ENCODE measurements at regions of chr10 and their contacts with region 1.

Region 1: DNA sequence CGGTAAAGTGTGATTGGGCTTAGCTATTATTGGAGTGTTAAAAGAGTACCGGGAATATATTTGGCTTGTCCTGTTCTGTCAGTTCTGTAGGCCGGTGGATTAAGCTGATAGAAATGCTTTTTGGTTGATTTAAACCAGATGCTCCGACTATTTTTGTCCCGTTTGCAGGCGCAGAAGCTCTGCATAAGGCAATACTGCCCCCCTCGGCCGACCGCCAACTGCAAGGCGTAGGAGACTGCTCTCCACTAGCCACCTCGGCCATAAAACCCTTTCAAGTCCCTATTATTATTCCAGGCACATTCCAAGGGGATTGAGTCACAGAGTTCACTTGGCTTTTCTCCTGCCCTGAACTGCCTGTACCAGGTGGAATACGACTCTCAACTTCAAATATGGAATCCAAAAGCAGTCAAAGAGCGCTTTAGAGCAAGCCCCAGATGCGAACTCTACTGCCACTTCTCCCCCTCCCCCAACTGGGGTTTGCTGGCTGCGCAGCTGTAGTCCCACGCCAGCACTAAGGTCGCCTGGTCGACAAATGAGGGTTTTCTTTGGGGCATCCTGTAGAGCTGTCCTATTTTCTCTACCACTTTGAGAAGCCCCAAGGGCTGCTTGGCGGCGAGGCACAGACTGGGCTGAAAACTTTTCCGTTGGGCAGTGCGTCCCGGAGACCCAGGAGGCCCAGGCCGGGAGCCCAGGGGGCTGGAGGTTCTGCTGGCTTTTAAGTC is 108.3 kb downstream of the REEP3 start:
- DNase-seq: peak; percentile 89
- H3K4me3 Mint-ChIP-seq: peak overlapping the region; percentile 90
- H3K27ac Mint-ChIP-seq: peak overlapping the region; percentile 75
- H3K4me1 Mint-ChIP-seq: peaks cover 24% of the 10 kb centered on the region
- H3K27me3 Mint-ChIP-seq: peaks cover 2% of the 10 kb centered on the region

Region 2: GRCh38 chr10:63173468-63174232 is 455.9 kb before region 1 on chr10:
- CTCF ChIA-PET with region 1: interaction called, 139 read pairs
- POLR2A ChIA-PET with region 1: no interaction called
- intact Hi-C with region 1: loop called (anchors 1 kb)
- DNase-seq: no peak
- H3K4me3 Mint-ChIP-seq: no peak overlapping the region
- H3K27ac Mint-ChIP-seq: peak overlapping the region; percentile 65
- H3K4me1 Mint-ChIP-seq: peaks cover 52% of the 10 kb centered on the region
- H3K27me3 Mint-ChIP-seq: no peaks in the 10 kb centered on the region

Region 3: GRCh38 chr10:63236113-63236935 is 393.2 kb before region 1 on chr10:
- CTCF ChIA-PET with region 1: interaction called, 11 read pairs
- POLR2A ChIA-PET with region 1: no interaction called
- intact Hi-C with region 1: no loop called
- DNase-seq: no peak
- H3K4me3 Mint-ChIP-seq: no peak overlapping the region
- H3K27ac Mint-ChIP-seq: peak overlapping the region; percentile 38
- H3K4me1 Mint-ChIP-seq: peaks cover 55% of the 10 kb centered on the region
- H3K27me3 Mint-ChIP-seq: no peaks in the 10 kb centered on the region

Region 4: GRCh38 chr10:63465293-63466143 is 164.0 kb before region 1 on chr10 and contains the start of gene JMJD1C:
- CTCF ChIA-PET with region 1: interaction called, 12 read pairs
- POLR2A ChIA-PET with region 1: no interaction called
- intact Hi-C with region 1: loop called (anchors 2 kb)
- DNase-seq: peak; percentile 69
- H3K4me3 Mint-ChIP-seq: peak within 1 kb of the TSS; percentile 91
- H3K27ac Mint-ChIP-seq: peak within 1 kb of the TSS; percentile 58
- H3K4me1 Mint-ChIP-seq: peaks cover 18% of the 10 kb centered on the region
- H3K27me3 Mint-ChIP-seq: no peaks in the 10 kb centered on the region
- total RNA-seq, gene JMJD1C: 42.6 to 47.3 TPM

Region 5: GRCh38 chr10:63573068-63573697 is 56.3 kb before region 1 on chr10:
- CTCF ChIA-PET with region 1: no interaction called
- POLR2A ChIA-PET with region 1: no interaction called
- intact Hi-C with region 1: loop called (anchors 2 kb)
- DNase-seq: no peak
- H3K4me3 Mint-ChIP-seq: no peak overlapping the region
- H3K27ac Mint-ChIP-seq: peak overlapping the region; percentile 40
- H3K4me1 Mint-ChIP-seq: peaks cover 28% of the 10 kb centered on the region
- H3K27me3 Mint-ChIP-seq: no peaks in the 10 kb centered on the region

Region 6: GRCh38 chr10:63707254-63707910 is 77.9 kb after region 1 on chr10:
- CTCF ChIA-PET with region 1: interaction called, 3 read pairs
- POLR2A ChIA-PET with region 1: interaction called, 3 read pairs
- intact Hi-C with region 1: loop called (anchors 1 kb)
- DNase-seq: peak; percentile 48
- H3K4me3 Mint-ChIP-seq: no peak overlapping the region
- H3K27ac Mint-ChIP-seq: peak overlapping the region; percentile 20
- H3K4me1 Mint-ChIP-seq: peaks cover 12% of the 10 kb centered on the region
- H3K27me3 Mint-ChIP-seq: no peaks in the 10 kb centered on the region